Breast epithelium (tissue), 4 donors: ENCODE measurements at regions of chr1 and their contacts with region 1.

Region 1: DNA sequence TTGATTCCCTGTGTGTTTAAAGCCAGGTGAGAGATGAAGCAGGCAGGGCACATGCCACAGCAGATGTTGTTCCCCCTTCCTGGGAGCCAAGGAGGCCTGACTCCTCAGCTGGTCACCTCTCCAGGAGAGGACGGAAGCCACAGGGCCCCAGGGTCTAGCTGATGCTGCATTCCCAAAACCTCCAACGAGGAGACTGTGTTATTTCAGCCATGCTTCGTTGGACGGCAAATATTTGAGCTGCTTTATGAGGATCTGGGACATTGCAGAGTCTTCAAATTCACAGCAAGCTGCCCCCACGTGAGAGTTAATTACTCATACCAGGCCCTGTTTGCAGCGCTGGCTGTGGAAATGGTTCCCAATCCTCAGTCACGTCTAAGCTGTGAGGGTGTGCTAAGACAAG is 85.3 kb downstream of the CDC7 start:
- DNase-seq: no peak
- H3K4me3 ChIP-seq: no peak overlapping the region
- H3K27ac ChIP-seq: no peak overlapping the region
- H3K4me1 ChIP-seq: no peaks in the 10 kb centered on the region
- H3K27me3 ChIP-seq: no peaks in the 10 kb centered on the region
- CTCF ChIP-seq: no peak
- POLR2A ChIP-seq: no peak

Region 2: DNA sequence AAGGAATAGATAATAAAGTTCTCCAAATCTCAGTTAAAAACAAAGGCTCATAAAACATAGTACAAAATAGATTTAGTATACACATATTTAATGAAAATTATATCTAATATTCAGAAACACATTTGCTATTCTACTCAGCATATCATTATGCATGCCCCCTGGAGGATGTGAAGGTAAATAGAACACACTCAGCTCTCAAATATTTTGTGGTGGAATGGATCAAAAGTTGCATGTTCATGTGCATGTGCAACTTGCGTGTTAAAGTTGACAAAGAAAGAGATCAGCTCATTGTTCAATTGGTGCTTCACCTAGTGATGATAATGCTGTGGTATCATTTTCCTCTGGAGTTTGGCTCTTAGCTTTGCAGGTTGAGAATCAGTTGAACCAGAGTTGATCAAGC is 559.2 kb before region 1 on chr1:
- intact Hi-C with region 1: loop called (anchors 5 kb)
- DNase-seq: no peak
- H3K4me3 ChIP-seq: no peak overlapping the region
- H3K27ac ChIP-seq: no peak overlapping the region
- H3K4me1 ChIP-seq: no peaks in the 10 kb centered on the region
- H3K27me3 ChIP-seq: no peaks in the 10 kb centered on the region
- CTCF ChIP-seq: no peak
- POLR2A ChIP-seq: no peak